RWPE1 (cell line): ENCODE measurements at regions of chr1 and their contacts with region 1.

Region 1: DNA sequence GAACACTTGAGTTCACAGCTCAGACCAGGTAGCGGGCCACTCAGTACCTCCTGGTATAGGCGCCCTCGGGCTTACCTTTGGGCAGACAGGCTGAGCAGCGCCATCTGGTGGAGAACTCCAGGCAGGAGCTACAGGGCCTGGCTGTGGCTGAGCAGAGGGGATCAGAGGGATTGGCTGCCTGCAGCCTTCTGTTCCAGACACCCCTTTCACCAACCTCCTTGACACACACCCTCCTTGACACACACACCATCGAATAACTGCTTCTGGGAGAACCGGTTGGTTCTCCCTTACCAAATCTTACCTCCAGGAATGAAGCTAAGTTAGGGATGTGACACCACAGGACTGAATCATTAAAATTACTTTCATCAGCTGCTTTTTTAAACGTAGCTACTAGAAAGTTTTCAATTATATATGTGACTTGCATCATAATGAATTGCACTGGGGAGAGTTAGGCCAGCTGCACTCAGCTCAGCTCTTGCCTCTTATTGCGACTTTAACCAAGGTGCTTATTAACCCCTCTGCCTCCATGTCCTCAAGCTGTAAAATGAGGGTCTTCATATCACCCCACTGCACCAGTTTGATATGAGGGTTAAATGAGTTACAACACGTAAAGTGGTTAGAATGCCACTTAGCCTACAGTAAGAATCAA is 6.6 kb downstream of the LIN28A start:
- DNase-seq: peak; percentile 73
- H3K27ac ChIP-seq: no peak overlapping the region
- CTCF ChIP-seq: peak; percentile 86

Region 2: DNA sequence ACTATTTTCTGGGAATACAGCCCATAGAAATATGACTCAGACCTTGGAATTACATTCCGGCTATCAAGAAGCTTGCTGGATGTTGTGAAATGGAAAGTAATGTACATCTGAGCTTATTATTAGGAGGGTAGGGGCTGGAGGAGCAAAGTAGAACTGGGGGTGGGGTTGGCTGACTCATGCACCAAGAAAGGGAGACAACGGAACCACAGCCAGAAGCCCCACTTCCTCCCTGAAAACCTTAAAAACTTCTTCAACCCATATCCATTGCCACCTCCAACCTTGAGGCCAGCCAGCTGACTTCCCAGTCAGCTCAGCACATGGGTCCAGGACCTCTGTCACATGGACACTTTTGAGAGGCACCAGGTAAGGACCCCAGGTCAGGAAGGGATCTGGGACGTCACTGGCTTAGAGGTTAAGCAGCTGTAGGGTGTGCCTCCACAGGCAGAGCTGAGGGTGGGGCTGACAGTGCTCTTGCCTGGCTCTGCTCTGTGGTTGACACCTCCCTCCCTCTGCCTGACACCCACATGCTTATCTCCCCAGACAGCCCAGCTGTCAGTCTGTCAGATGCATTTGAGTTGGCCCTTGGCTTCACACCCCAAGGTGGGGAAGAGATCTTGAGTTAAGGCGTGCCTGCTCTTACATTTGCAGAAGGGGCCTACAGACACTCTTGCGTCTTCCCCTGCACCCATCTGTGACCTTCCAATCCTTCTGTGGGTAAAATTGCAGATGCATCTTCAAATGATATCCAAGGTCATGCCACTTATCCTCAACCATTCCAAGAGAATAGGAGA is 39.0 kb before region 1 on chr1:
- CTCF ChIA-PET with region 1: interaction called, 11 read pairs
- POLR2A ChIA-PET with region 1: no interaction called
- DNase-seq: peak; percentile 97
- H3K27ac ChIP-seq: peak overlapping the region; percentile 100
- CTCF ChIP-seq: no peak

Region 3: GRCh38 chr1:26405281-26405915 is 11.8 kb before region 1 on chr1:
- CTCF ChIA-PET with region 1: interaction called, 13 read pairs
- POLR2A ChIA-PET with region 1: no interaction called
- DNase-seq: peak; percentile 28
- H3K27ac ChIP-seq: no peak overlapping the region
- CTCF ChIP-seq: no peak

Region 4: GRCh38 chr1:26431979-26432695 is 14.9 kb after region 1 on chr1 and contains the start of gene DHDDS:
- CTCF ChIA-PET with region 1: interaction called, 10 read pairs
- POLR2A ChIA-PET with region 1: interaction called, 3 read pairs
- DNase-seq: peak; percentile 99
- H3K27ac ChIP-seq: peak within 1 kb of the TSS; percentile 78
- CTCF ChIP-seq: no peak